Head of caudate nucleus (tissue), 42 donors: ENCODE measurements at regions of chr21 and their contacts with region 1.

Region 1: DNA sequence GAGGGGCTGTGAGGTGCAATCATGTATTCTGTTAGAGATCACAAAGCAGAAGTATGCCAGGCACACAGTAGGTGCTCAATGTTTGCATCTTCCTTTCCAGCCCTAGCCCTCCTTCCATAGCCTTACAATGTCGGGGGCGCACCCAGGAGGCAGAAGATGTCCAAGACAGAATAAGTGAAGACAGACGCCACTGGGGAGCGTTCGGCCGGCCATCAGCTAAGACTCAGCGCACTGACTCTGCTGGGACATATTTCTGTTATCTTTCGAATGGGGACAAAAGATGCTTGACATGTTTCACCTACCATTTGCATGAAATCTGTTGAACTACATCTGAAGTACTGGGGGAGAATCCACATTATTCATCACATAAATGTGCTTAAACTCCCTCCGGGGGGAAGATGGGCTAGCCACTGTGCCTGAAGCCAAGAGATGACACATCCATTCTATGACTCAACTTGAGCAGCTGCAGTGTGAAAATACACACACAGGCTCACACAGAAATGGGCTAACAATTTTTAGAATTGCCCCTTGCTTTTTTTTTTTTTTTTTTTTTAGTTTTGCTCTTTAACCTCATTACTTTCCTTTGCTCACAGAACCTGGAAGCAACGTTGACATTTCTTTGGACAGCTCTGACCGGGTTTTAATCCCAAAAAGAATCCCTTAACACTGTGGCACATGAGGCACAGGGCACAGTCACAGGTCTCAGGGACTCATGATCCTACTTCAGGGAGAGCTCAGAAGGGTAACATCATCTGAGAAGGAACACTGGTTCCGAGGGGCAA is 7.9 kb downstream of the TIAM1 start:
- DNase-seq: peak in 25 of 42 donors; percentile 25 to 86 (median 55)

Region 2: GRCh38 chr21:31218830-31219608 is 117.1 kb before region 1 on chr21:
- intact Hi-C with region 1: loop called (anchors 10 kb)
- DNase-seq: peak in 24 of 42 donors; percentile 10 to 59 (median 24)